Left lung (tissue), 14 donors: ENCODE measurements at regions of chr11 and their contacts with region 1.

Region 1: GRCh38 chr11:118290923-118291322 is 13.6 kb upstream of the CD3E start:
- DNase-seq: peak in 2 of 4 donors; percentile 33 to 37
- ATAC-seq: peak; percentile 95
- H3K4me3 ChIP-seq: no peak overlapping the region
- H3K27ac ChIP-seq: peak overlapping the region in 1 of 2 donors; percentile 14
- H3K4me1 ChIP-seq: no peaks in the 10 kb centered on the region
- H3K27me3 ChIP-seq: no peaks in the 10 kb centered on the region
- CTCF ChIP-seq: peak; percentile 30 to 53

Region 2: GRCh38 chr11:118198370-118198769 is 92.6 kb before region 1 on chr11:
- intact Hi-C with region 1: loop called in 1 of 2 experiments (anchors 5 kb)
- DNase-seq: peak; percentile 64 to 92 (median 79)
- ATAC-seq: peak; percentile 76
- H3K4me3 ChIP-seq: no peak overlapping the region
- H3K27ac ChIP-seq: peak overlapping the region in 1 of 2 donors; percentile 8
- H3K4me1 ChIP-seq: peaks cover 0 to 22% of the 10 kb centered on the region in 2 donors
- H3K27me3 ChIP-seq: no peaks in the 10 kb centered on the region
- CTCF ChIP-seq: peak; percentile 81 to 84

Region 3: GRCh38 chr11:118342503-118343161 is 51.7 kb after region 1 on chr11 and contains the start of gene CD3D:
- intact Hi-C with region 1: loop called in 1 of 2 experiments (anchors 10 kb)
- DNase-seq: no peak
- ATAC-seq: no peak
- H3K4me3 ChIP-seq: peak within 1 kb of the TSS in 1 of 2 donors; percentile 22
- H3K27ac ChIP-seq: no peak within 1 kb of the TSS
- H3K4me1 ChIP-seq: no peaks in the 10 kb centered on the region
- H3K27me3 ChIP-seq: no peaks in the 10 kb centered on the region
- CTCF ChIP-seq: no peak
- polyA plus RNA-seq, gene CD3D: 0.54 to 1.7 (median 1.5) TPM